ENCODE measurements at regions of chr22 and their contacts with region 1.

Region 1: GRCh38 chr22:45268958-45269844 is 15.5 kb upstream of the UPK3A start:
- DNase-seq: peak; percentile 53
- ATAC-seq: peak; percentile 96
- H3K4me3 ChIP-seq: peak overlapping the region; percentile 86
- H3K27ac ChIP-seq: peak overlapping the region; percentile 54
- H3K4me1 ChIP-seq: peaks cover 9% of the 10 kb centered on the region
- H3K27me3 ChIP-seq: peaks cover 8% of the 10 kb centered on the region
- CTCF ChIP-seq: peak; percentile 90
- POLR2A ChIP-seq: no peak
- RAD21 ChIP-seq: peak; percentile 93

Region 2: DNA sequence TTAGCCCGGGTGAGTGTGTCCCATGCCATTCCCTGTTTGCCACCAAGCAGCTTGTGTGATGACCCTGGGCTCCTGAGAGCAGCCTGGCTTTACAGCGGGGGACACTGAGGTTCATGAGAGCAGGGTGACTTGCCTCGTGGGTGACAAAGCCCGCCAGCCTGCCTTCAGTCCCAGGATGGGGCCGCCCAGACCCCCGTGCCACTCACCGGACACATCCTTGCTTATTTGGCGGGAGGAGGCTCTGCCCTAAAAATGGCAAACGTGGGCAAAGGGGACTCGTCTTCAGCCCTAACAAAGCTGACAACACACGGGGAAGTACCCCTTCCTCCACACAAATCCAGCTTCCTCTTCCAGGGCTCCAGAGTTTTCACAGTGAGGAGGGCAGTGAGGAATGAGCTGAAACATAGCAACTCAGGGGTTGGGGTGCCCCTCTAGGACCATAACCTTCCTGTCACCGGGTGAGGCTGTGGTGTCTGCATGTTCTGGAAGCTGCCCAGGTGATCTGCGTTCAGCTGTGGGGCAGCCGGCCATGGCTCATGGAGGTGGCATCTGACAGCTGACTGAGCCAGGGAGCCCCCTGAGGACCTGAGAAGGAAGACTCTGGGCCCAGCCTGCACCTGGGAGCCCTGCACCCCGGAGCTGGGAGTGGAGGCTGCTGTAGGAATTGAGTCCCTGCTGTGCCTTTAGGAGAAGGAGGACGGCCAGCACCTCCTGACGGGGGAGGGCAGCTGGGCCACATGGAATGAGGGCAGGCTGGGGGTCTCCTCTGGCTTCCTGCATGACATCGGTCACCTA is 161.0 kb after region 1 on chr22:
- CTCF ChIA-PET with region 1: no interaction called
- POLR2A ChIA-PET with region 1: no interaction called
- dilution Hi-C with region 1: no loop called
- in situ Hi-C with region 1: loop called (anchors 5 kb)
- intact Hi-C with region 1: loop called (anchors 1 kb)
- DNase-seq: no peak
- ATAC-seq: no peak
- H3K4me3 ChIP-seq: no peak overlapping the region
- H3K27ac ChIP-seq: no peak overlapping the region
- H3K4me1 ChIP-seq: no peaks in the 10 kb centered on the region
- H3K27me3 ChIP-seq: peaks cover 19% of the 10 kb centered on the region; the same call in 1 of the 2 replicates
- CTCF ChIP-seq: no peak
- POLR2A ChIP-seq: no peak
- RAD21 ChIP-seq: no peak

Region 3: GRCh38 chr22:45435544-45436139 is 166.4 kb after region 1 on chr22:
- CTCF ChIA-PET with region 1: no interaction called
- POLR2A ChIA-PET with region 1: no interaction called
- dilution Hi-C with region 1: no loop called
- in situ Hi-C with region 1: loop called (anchors 5 kb)
- intact Hi-C with region 1: loop called (anchors 1 kb)
- DNase-seq: peak; percentile 90
- ATAC-seq: peak; percentile 96
- H3K4me3 ChIP-seq: no peak overlapping the region
- H3K27ac ChIP-seq: peak overlapping the region; percentile 8; the same call in 1 of the 2 replicates
- H3K4me1 ChIP-seq: 0 out of 2 replicates have a peak, but pooled peaks cover 2% of the 10 kb centered on the region
- H3K27me3 ChIP-seq: no peaks in the 10 kb centered on the region
- CTCF ChIP-seq: peak; percentile 95
- POLR2A ChIP-seq: 0 out of 2 replicates have a peak, but pooled peaks have one; percentile 35
- RAD21 ChIP-seq: peak; percentile 88

Measured in IMR-90 (cell line).